ENCODE measurements at regions of chr1 and their contacts with region 1.

Region 1: GRCh38 chr1:26853156-26853555 is 9.8 kb upstream of the SFN start:
- DNase-seq: peak; percentile 84 to 90 (median 86)
- ATAC-seq: peak; percentile 69 to 90 (median 87)
- H3K4me3 ChIP-seq: no peak overlapping the region
- H3K27ac ChIP-seq: no peak overlapping the region
- H3K4me1 ChIP-seq: peaks cover 0 to 14% (median 0%) of the 10 kb centered on the region in 4 donors
- H3K27me3 ChIP-seq: no peaks in the 10 kb centered on the region
- CTCF ChIP-seq: peak; percentile 81 to 90 (median 86)
- POLR2A ChIP-seq: no peak

Region 2: GRCh38 chr1:26889551-26890466 is 36.7 kb after region 1 on chr1 and contains the start of gene GPN2:
- intact Hi-C with region 1: loop called in 1 of 2 experiments (anchors 5 kb)
- DNase-seq: peak; percentile 84 to 88 (median 84)
- ATAC-seq: peak; percentile 94 to 97 (median 95)
- H3K4me3 ChIP-seq: peak within 1 kb of the TSS; percentile 80 to 95 (median 95)
- H3K27ac ChIP-seq: peak within 1 kb of the TSS; percentile 71 to 77 (median 73)
- H3K4me1 ChIP-seq: peaks cover 0 to 14% (median 0%) of the 10 kb centered on the region in 4 donors
- H3K27me3 ChIP-seq: no peaks in the 10 kb centered on the region
- CTCF ChIP-seq: no peak
- POLR2A ChIP-seq: peak; percentile 73
- total RNA-seq, gene GPN2: 5.6 to 18.3 (median 15.3) TPM

Measured in right lobe of liver (tissue), 6 donors.